Activated CD8-positive, alpha-beta memory T cell treated with anti-CD3 and anti-CD28 coated beads, Interleukin-2, amount 10 ng/mL, durations not matched to agents 7 days and 5 days (primary cell): ENCODE measurements at regions of chr20 and their contacts with region 1.

Region 1: GRCh38 chr20:64038565-64039292 is 2.7 kb downstream of the C20orf204 start:
- DNase-seq: peak; percentile 86
- ATAC-seq: peak; percentile 66
- H3K4me3 Mint-ChIP-seq: peak overlapping the region; percentile 71
- H3K27ac Mint-ChIP-seq: peak overlapping the region; percentile 68
- H3K4me1 Mint-ChIP-seq: peaks cover 70% of the 10 kb centered on the region
- H3K27me3 Mint-ChIP-seq: peaks cover 2% of the 10 kb centered on the region

Region 2: GRCh38 chr20:63903796-63904561 is 134.8 kb before region 1 on chr20:
- CTCF ChIA-PET with region 1: no interaction called
- DNase-seq: no peak
- ATAC-seq: no peak
- H3K4me3 Mint-ChIP-seq: no peak overlapping the region
- H3K27ac Mint-ChIP-seq: peak overlapping the region; percentile 57
- H3K4me1 Mint-ChIP-seq: peaks cover 37% of the 10 kb centered on the region
- H3K27me3 Mint-ChIP-seq: no peaks in the 10 kb centered on the region

Region 3: DNA sequence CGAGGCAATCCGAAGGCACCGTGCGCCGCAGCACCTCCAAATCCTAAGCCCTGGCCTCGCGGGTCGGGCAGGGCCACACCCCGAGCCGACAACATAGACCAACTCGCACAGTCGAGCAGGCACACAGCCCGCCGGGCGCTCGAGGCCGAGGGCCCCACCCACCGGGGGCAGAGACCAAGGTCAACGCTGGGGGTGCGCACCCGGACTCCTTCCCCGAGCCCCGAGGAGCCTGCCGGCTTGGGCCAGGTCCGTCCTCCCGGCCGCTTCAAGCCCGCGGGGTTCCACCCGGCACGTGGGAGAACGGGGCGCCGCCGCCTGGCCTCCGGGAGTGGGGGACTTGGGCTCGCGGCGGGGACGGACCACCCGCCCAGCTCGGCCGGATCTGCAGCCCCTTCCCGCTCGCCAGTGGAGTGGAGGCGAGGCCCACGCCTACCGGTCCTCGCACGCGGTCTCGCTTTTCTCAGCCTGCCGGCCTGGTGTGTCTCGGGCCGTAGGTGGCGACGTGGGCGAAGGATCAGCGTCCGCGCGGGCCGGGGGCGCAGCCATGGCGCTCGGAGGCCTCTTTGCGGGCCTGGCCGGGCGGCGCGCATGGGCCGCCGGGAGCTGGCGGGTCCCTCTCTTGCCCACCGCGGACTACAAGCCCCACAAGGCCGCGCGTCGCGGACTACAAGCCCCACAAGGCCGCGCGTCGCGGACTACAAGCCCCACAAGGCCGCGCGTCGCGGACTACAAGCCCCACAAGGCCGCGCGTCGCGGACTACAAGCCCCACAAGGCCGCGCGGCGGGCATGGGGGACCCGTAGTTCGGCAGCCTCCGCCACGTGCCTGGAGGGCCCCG is 82.7 kb before region 1 on chr20 and contains the start of gene UCKL1:
- CTCF ChIA-PET with region 1: interaction called, 18 read pairs
- DNase-seq: peak; percentile 94
- ATAC-seq: peak; percentile 83
- H3K4me3 Mint-ChIP-seq: peak within 1 kb of the TSS; percentile 78
- H3K27ac Mint-ChIP-seq: peak within 1 kb of the TSS; percentile 85
- H3K4me1 Mint-ChIP-seq: peaks cover 30% of the 10 kb centered on the region
- H3K27me3 Mint-ChIP-seq: no peaks in the 10 kb centered on the region
- total RNA-seq, gene UCKL1: 41.1 to 41.9 TPM

Region 4: GRCh38 chr20:63980806-63981728 is 57.7 kb before region 1 on chr20 and contains the start of gene PRPF6:
- CTCF ChIA-PET with region 1: interaction called, 190 read pairs
- DNase-seq: peak; percentile 97
- ATAC-seq: peak; percentile 64
- H3K4me3 Mint-ChIP-seq: peak within 1 kb of the TSS; percentile 92
- H3K27ac Mint-ChIP-seq: peak within 1 kb of the TSS; percentile 99
- H3K4me1 Mint-ChIP-seq: peaks cover 59% of the 10 kb centered on the region
- H3K27me3 Mint-ChIP-seq: no peaks in the 10 kb centered on the region
- total RNA-seq, gene PRPF6: 77.5 to 80.6 TPM

Region 5: GRCh38 chr20:64010711-64011237 is 28.0 kb before region 1 on chr20:
- CTCF ChIA-PET with region 1: interaction called, 20 read pairs
- DNase-seq: peak; percentile 53
- ATAC-seq: peak; percentile 67
- H3K4me3 Mint-ChIP-seq: no peak overlapping the region
- H3K27ac Mint-ChIP-seq: peak overlapping the region; percentile 72
- H3K4me1 Mint-ChIP-seq: peaks cover 60% of the 10 kb centered on the region
- H3K27me3 Mint-ChIP-seq: no peaks in the 10 kb centered on the region

Region 6: DNA sequence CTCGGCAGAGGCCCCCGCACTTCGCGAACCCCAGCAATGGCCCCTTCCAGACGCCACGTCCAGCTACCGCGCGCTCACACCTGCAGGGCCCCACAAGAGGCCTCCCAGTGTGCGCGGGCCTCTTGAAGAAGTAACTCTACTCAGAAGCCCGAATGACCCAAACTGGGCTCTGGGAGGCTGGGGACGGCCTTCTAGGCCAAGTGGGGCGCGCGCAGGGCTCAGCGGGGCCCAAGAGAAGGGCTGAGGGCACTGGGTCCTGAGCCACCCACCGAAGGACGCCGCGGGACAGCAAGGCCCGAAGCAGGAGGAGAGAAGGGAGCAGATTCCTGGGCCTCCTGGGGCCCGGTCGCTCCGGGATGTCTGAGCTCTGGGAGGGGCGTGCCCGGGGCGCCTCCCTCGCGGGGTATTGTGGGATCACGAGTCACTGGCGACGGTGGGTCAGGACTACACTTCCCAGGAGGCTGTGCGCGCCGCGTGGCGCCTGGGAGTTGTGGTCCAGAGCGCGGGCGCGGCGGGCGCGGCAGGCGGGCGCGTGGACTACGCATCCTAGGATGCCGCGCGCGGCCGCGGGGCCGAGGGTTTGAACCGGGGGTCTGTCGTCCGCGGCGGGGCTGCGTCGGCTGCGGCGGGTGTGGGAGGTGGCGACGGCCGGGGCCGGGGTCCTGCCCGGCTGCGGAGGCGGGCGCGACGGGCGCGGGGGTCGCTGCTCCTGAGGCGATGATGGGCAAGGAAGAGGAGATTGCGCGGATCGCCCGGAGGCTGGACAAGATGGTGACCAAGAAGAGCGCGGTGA is 24.1 kb after region 1 on chr20 and contains the start of gene TCEA2:
- CTCF ChIA-PET with region 1: interaction called, 133 read pairs
- DNase-seq: peak; percentile 97
- ATAC-seq: peak; percentile 83
- H3K4me3 Mint-ChIP-seq: peak within 1 kb of the TSS; percentile 85
- H3K27ac Mint-ChIP-seq: peak within 1 kb of the TSS; percentile 85
- H3K4me1 Mint-ChIP-seq: peaks cover 56% of the 10 kb centered on the region
- H3K27me3 Mint-ChIP-seq: no peaks in the 10 kb centered on the region
- total RNA-seq, gene TCEA2: 54.3 to 57.4 TPM

Region 7: GRCh38 chr20:64119681-64120341 is 81.1 kb after region 1 on chr20:
- CTCF ChIA-PET with region 1: interaction called, 38 read pairs
- DNase-seq: no peak
- ATAC-seq: peak; percentile 14
- H3K4me3 Mint-ChIP-seq: peak overlapping the region; percentile 5
- H3K27ac Mint-ChIP-seq: peak overlapping the region; percentile 42
- H3K4me1 Mint-ChIP-seq: peaks cover 10% of the 10 kb centered on the region
- H3K27me3 Mint-ChIP-seq: peaks cover 28% of the 10 kb centered on the region